ENCODE measurements at regions of chr17 and their contacts with region 1.

Region 1: DNA sequence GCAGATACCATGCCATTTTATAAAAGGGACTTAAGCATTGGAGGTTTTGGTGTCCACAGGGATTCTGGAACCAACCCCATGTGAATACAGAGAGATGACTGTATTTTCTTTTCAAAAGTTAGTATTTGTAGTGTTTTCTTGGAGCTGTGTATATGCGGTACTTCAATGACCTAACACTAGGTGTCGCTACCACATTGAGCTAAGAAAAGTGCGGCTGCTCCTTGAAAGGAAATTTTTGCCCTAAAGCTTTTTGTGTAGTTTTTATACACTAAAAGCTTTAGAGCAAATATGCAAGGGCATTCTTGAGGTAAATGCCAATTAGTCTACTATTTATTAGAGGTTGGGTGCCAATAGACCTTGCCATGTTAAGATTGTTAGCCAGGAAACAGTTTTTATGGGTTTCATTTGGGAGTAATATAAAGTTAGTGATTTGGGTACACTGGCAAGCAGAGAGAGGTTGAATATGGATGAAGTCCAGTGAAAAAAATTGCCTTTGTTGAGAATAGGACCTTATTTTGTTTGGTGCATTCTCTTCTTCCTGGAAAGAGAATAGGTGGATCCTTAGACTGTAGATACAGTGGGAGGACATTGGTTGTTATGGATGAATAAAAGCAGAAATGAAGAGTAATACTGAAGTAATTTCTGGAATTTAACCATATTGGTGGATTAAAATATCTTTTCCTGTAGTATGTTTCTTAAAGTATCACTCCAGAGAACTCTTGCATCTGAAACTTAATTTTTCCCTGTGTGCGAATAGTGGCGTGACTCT is 43.3 kb downstream of the BCAS3 start:
- DNase-seq: peak; percentile 68
- ATAC-seq: peak; percentile 44
- H3K4me3 ChIP-seq: no peak overlapping the region
- H3K4me3 Mint-ChIP-seq: no peak overlapping the region
- H3K27ac ChIP-seq: no peak overlapping the region
- H3K27ac Mint-ChIP-seq: no peak overlapping the region
- H3K4me1 ChIP-seq: peaks cover 3 to 11% of the 10 kb centered on the region in 2 donors
- H3K4me1 Mint-ChIP-seq: peaks cover 13% of the 10 kb centered on the region
- H3K27me3 ChIP-seq: no peaks in the 10 kb centered on the region
- H3K27me3 Mint-ChIP-seq: no peaks in the 10 kb centered on the region
- CTCF ChIP-seq: peak; percentile 95

Region 2: GRCh38 chr17:60563746-60564145 is 157.2 kb before region 1 on chr17:
- CTCF ChIA-PET with region 1: no interaction called
- POLR2A ChIA-PET with region 1: no interaction called
- intact Hi-C with region 1: no loop called
- DNase-seq: no peak
- ATAC-seq: no peak
- H3K4me3 ChIP-seq: no peak overlapping the region
- H3K4me3 Mint-ChIP-seq: no peak overlapping the region
- H3K27ac ChIP-seq: no peak overlapping the region
- H3K27ac Mint-ChIP-seq: no peak overlapping the region
- H3K4me1 ChIP-seq: no peaks in the 10 kb centered on the region
- H3K4me1 Mint-ChIP-seq: no peaks in the 10 kb centered on the region
- H3K27me3 ChIP-seq: no peaks in the 10 kb centered on the region
- H3K27me3 Mint-ChIP-seq: no peaks in the 10 kb centered on the region
- CTCF ChIP-seq: no peak

Region 3: GRCh38 chr17:60704170-60704569 is 16.8 kb before region 1 on chr17:
- CTCF ChIA-PET with region 1: interaction called, 12 read pairs
- POLR2A ChIA-PET with region 1: no interaction called
- intact Hi-C with region 1: no loop called
- DNase-seq: no peak
- ATAC-seq: no peak
- H3K4me3 ChIP-seq: no peak overlapping the region
- H3K4me3 Mint-ChIP-seq: no peak overlapping the region
- H3K27ac ChIP-seq: no peak overlapping the region
- H3K27ac Mint-ChIP-seq: no peak overlapping the region
- H3K4me1 ChIP-seq: no peaks in the 10 kb centered on the region
- H3K4me1 Mint-ChIP-seq: no peaks in the 10 kb centered on the region
- H3K27me3 ChIP-seq: no peaks in the 10 kb centered on the region
- H3K27me3 Mint-ChIP-seq: no peaks in the 10 kb centered on the region
- CTCF ChIP-seq: no peak

Region 4: DNA sequence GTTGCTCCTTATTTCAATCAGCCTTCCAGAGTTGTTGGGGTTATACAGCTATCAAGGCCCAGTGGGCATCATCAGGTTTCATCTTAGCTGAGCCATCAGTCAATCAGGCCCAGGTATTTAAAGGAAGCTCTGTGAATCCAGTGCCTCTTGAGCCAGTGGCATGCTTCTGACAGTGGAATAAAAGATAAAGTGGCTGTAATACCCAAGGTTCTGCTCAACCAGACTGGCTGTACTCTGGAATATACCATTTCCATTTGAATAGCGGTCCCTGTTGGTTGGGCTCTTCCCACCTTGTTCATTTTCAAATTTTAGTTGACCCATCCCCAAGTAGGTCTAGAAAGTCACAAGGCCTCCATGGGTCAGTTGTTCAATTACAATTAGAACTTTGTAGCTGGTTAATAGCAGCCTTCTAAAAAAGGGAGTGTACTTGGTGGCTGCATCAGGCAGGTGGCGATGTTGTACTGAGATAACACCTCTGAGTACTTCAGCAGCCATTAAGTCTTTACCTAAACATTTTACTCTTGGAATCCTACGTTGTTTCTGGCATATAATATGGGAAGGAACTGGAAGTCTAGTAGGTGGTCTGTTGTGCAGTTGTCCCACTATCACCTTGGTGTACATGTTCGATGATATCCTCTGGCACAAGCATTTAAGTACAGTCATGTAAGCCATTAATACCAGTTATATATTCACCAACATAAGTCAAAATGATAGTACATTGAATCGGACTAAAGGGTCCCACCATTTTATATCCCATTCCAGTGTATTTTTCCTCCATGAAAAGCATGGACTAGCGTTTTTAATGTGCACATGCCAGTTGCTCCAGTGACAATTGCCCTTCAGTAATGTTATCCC is 250.8 kb after region 1 on chr17:
- CTCF ChIA-PET with region 1: interaction called, 12 read pairs
- POLR2A ChIA-PET with region 1: no interaction called
- intact Hi-C with region 1: no loop called
- DNase-seq: peak; percentile 43
- ATAC-seq: no peak
- H3K4me3 ChIP-seq: no peak overlapping the region
- H3K4me3 Mint-ChIP-seq: no peak overlapping the region
- H3K27ac ChIP-seq: no peak overlapping the region
- H3K27ac Mint-ChIP-seq: no peak overlapping the region
- H3K4me1 ChIP-seq: no peaks in the 10 kb centered on the region
- H3K4me1 Mint-ChIP-seq: no peaks in the 10 kb centered on the region
- H3K27me3 ChIP-seq: no peaks in the 10 kb centered on the region
- H3K27me3 Mint-ChIP-seq: peaks cover 4% of the 10 kb centered on the region
- CTCF ChIP-seq: peak; percentile 59

Region 5: GRCh38 chr17:61837175-61838051 is 1116.5 kb after region 1 on chr17:
- CTCF ChIA-PET with region 1: interaction called, 10 read pairs
- POLR2A ChIA-PET with region 1: no interaction called
- intact Hi-C with region 1: no loop called
- DNase-seq: peak; percentile 74
- ATAC-seq: peak; percentile 62
- H3K4me3 ChIP-seq: no peak overlapping the region
- H3K4me3 Mint-ChIP-seq: no peak overlapping the region
- H3K27ac ChIP-seq: no peak overlapping the region
- H3K27ac Mint-ChIP-seq: no peak overlapping the region
- H3K4me1 ChIP-seq: peaks cover 5 to 6% of the 10 kb centered on the region in 2 donors
- H3K4me1 Mint-ChIP-seq: peaks cover 9% of the 10 kb centered on the region
- H3K27me3 ChIP-seq: no peaks in the 10 kb centered on the region
- H3K27me3 Mint-ChIP-seq: no peaks in the 10 kb centered on the region
- CTCF ChIP-seq: peak; percentile 97